ENCODE measurements at regions of chr14 and their contacts with region 1.

Region 1: DNA sequence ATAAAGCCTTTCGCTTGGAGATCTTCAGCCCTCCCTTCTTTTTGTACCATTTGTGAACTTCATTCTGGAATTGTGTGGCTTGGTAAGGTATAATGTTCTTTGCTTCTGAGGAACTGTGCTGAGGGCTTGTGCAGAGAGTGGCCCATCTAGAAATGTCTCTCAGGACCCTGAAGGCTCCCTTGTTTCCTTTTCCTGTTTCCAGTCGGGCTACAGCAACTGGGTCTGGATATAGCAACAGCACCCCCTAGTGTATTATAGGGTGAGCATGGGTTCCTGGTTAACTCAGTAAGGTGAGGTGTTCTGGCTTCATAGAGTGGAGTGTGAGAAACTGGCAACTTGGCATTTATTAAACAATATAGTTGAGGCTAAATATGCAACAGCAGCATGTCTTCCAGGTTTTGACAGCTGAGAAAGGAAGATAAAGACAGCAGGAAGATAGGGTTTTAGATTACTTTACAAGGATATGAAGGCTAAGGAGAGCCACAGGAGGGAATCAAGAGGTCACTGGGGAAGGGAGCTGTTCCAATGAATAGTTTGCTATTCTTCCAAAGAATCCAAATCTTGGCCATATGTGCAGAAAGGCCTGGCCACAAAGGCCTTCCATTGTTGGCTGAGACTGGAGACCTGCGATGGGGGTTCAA is 49.1 kb upstream of the RNU6-8 start:
- DNase-seq: peak in 33 of 35 experiments; percentile 1 to 77 (median 26)
- ATAC-seq: peak; percentile 82 to 97 (median 90)
- H3K4me3 ChIP-seq: no peak overlapping the region
- H3K4me3 Mint-ChIP-seq: no peak overlapping the region
- H3K27ac ChIP-seq: no peak overlapping the region
- H3K27ac Mint-ChIP-seq: no peak overlapping the region
- H3K4me1 ChIP-seq: no peaks in the 10 kb centered on the region
- H3K4me1 Mint-ChIP-seq: no peaks in the 10 kb centered on the region
- H3K27me3 ChIP-seq: no peaks in the 10 kb centered on the region
- H3K27me3 Mint-ChIP-seq: no peaks in the 10 kb centered on the region

Region 2: DNA sequence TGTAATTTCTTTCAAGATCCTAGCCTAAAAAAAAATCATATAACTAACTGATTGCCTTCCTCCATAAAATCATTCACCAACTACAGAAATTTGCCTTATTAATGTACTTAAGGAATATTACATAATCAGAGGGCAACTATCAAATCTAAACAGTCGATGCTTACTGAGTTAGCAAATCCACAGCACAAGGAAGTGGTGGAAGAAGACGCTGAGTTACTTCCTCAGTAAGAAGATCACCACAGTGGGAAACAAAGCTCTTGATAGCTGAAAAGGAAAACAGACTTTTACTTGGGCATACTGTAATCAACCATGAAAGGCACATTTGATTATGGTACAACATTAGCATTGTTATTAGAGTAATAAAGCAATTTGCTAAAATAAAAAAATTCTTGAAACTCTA is 880.5 kb before region 1 on chr14:
- CTCF ChIA-PET with region 1: no interaction called
- POLR2A ChIA-PET with region 1: interaction called in 1 of 2 experiments, 10 read pairs
- DNase-seq: peak in 1 of 35 experiments; percentile 2
- ATAC-seq: no peak
- H3K4me3 ChIP-seq: no peak overlapping the region
- H3K4me3 Mint-ChIP-seq: no peak overlapping the region
- H3K27ac ChIP-seq: no peak overlapping the region
- H3K27ac Mint-ChIP-seq: peak overlapping the region; percentile 9 to 71
- H3K4me1 ChIP-seq: no peaks in the 10 kb centered on the region
- H3K4me1 Mint-ChIP-seq: peaks cover 9 to 11% (median 11%) of the 10 kb centered on the region in 3 donors
- H3K27me3 ChIP-seq: no peaks in the 10 kb centered on the region
- H3K27me3 Mint-ChIP-seq: no peaks in the 10 kb centered on the region

Region 3: GRCh38 chr14:31510222-31510621 is 741.9 kb before region 1 on chr14:
- CTCF ChIA-PET with region 1: interaction called, 4 to 16 read pairs
- POLR2A ChIA-PET with region 1: no interaction called
- DNase-seq: peak in 1 of 35 experiments; percentile 41
- ATAC-seq: no peak
- H3K4me3 ChIP-seq: no peak overlapping the region
- H3K4me3 Mint-ChIP-seq: no peak overlapping the region
- H3K27ac ChIP-seq: no peak overlapping the region
- H3K27ac Mint-ChIP-seq: no peak overlapping the region
- H3K4me1 ChIP-seq: no peaks in the 10 kb centered on the region
- H3K4me1 Mint-ChIP-seq: no peaks in the 10 kb centered on the region
- H3K27me3 ChIP-seq: no peaks in the 10 kb centered on the region
- H3K27me3 Mint-ChIP-seq: peaks cover 3 to 12% of the 10 kb centered on the region in 2 donors

Region 4: GRCh38 chr14:31926123-31926522 is 326.0 kb before region 1 on chr14:
- CTCF ChIA-PET with region 1: interaction called, 36 to 64 read pairs
- POLR2A ChIA-PET with region 1: no interaction called
- DNase-seq: peak in 5 of 35 experiments; percentile 13 to 63 (median 14)
- ATAC-seq: peak in 1 of 4 experiments; percentile 34
- H3K4me3 ChIP-seq: no peak overlapping the region
- H3K4me3 Mint-ChIP-seq: no peak overlapping the region
- H3K27ac ChIP-seq: no peak overlapping the region
- H3K27ac Mint-ChIP-seq: no peak overlapping the region
- H3K4me1 ChIP-seq: peaks cover 2 to 6% of the 10 kb centered on the region in 2 experiments
- H3K4me1 Mint-ChIP-seq: peaks cover 0 to 11% (median 8%) of the 10 kb centered on the region in 3 donors
- H3K27me3 ChIP-seq: no peaks in the 10 kb centered on the region
- H3K27me3 Mint-ChIP-seq: peaks cover 1 to 4% of the 10 kb centered on the region in 2 donors

Region 5: GRCh38 chr14:31934767-31935266 is 317.3 kb before region 1 on chr14:
- CTCF ChIA-PET with region 1: interaction called in 1 of 2 experiments, 16 read pairs
- POLR2A ChIA-PET with region 1: no interaction called
- DNase-seq: peak in 7 of 35 experiments; percentile 10 to 52 (median 15)
- ATAC-seq: no peak
- H3K4me3 ChIP-seq: no peak overlapping the region
- H3K4me3 Mint-ChIP-seq: no peak overlapping the region
- H3K27ac ChIP-seq: no peak overlapping the region
- H3K27ac Mint-ChIP-seq: no peak overlapping the region
- H3K4me1 ChIP-seq: peaks cover 0 to 2% of the 10 kb centered on the region in 2 experiments
- H3K4me1 Mint-ChIP-seq: peaks cover 0 to 12% (median 11%) of the 10 kb centered on the region in 3 donors
- H3K27me3 ChIP-seq: no peaks in the 10 kb centered on the region
- H3K27me3 Mint-ChIP-seq: peaks cover 0 to 1% of the 10 kb centered on the region in 2 donors

Region 6: DNA sequence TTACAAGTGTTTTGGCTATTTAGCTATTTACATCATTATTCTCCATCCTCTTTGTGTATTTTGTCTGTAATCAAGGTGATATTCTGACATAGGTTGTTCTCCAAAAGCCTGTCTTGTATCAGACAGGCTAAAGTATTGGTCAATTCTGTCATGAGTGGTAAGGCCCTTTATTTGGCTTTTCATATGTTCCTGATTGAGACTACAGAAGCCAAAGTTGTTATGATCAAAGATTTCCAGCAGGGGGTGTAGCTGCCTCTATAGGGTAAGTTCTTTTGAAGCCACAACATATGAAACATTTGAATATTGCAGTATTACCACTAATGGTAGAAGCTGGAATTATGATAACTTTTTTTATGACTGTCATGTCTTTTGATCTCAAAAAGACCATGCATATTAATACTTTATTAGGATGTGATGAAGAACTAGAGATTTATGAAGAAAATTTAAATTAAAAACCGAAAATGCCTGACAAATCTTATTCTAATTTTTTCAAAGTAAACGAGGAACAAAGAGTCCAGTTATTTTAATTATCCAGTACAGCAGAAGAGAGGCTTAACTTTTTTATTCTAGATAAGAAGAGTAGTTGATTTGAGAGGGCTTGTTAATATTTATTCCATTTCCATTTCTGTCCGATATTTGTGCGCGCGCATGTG is 178.5 kb before region 1 on chr14:
- CTCF ChIA-PET with region 1: interaction called, 59 to 69 read pairs
- POLR2A ChIA-PET with region 1: no interaction called
- DNase-seq: peak in 31 of 35 experiments; percentile 2 to 85 (median 38)
- ATAC-seq: no peak
- H3K4me3 ChIP-seq: no peak overlapping the region
- H3K4me3 Mint-ChIP-seq: no peak overlapping the region
- H3K27ac ChIP-seq: no peak overlapping the region
- H3K27ac Mint-ChIP-seq: no peak overlapping the region
- H3K4me1 ChIP-seq: peaks cover 5 to 12% of the 10 kb centered on the region in 2 experiments
- H3K4me1 Mint-ChIP-seq: peaks cover 18 to 24% (median 19%) of the 10 kb centered on the region in 3 donors
- H3K27me3 ChIP-seq: no peaks in the 10 kb centered on the region
- H3K27me3 Mint-ChIP-seq: no peaks in the 10 kb centered on the region